Natural killer cell (primary cell): ENCODE measurements at regions of chr4 and their contacts with region 1.

Region 1: GRCh38 chr4:105471566-105472176 is 2.2 kb downstream of the PPA2 start:
- DNase-seq: peak; percentile 51 to 88
- ATAC-seq: peak; percentile 44 to 56 (median 45)
- H3K4me3 ChIP-seq: no peak overlapping the region
- H3K4me3 Mint-ChIP-seq: peak overlapping the region; percentile 54
- H3K27ac ChIP-seq: no peak overlapping the region
- H3K27ac Mint-ChIP-seq: peak overlapping the region; percentile 78 to 96
- H3K4me1 ChIP-seq: peaks cover 14% of the 10 kb centered on the region
- H3K4me1 Mint-ChIP-seq: peaks cover 43 to 53% of the 10 kb centered on the region in 2 donors
- H3K27me3 ChIP-seq: no peaks in the 10 kb centered on the region
- H3K27me3 Mint-ChIP-seq: no peaks in the 10 kb centered on the region
- CTCF ChIP-seq: peak; percentile 75

Region 2: DNA sequence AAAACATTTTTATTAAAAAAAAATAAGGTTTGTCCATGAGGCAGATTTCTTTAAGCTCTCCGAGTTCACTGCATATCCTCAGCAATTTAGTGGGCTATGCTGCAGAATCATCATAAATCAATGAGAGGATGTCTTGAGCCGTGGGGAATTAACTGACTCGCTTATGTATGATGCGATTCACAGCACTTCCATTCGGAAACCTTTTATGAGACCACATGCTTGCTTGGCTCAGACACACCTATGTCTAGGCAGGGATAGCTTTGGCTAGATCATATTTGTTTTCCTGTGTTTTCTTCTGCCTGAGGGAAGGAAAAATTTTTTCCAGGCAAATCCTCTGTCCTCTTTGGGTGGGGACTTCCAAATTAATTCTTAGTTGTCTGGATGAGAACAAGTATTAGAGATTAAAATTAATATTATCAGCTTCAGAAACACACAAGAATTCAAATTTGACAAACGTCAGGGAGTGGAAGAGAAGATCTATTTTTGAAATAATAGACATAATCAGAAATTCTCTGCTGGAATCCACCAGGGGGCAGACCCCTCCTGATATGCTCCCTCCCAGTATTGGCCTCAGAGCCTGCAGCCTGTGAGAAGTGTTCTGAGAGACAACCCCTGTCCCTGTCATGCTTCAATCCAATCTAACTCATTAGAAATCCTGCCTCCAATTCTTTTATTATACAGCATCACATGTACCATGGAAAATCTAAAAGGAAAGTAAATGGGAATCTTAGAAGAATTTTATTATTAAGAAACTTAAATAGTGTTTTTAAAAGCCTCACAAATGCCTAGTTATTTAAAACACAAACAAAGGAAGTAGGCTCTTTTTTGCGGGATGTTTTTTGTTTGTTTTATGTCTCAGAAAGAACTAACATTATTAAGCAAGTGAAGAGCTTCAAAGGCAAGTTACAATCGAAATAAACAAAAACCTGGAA is 1406.8 kb before region 1 on chr4:
- intact Hi-C with region 1: loop called (anchors 5 kb)
- DNase-seq: peak in 1 of 2 donors; percentile 5
- ATAC-seq: no peak
- H3K4me3 ChIP-seq: no peak overlapping the region
- H3K4me3 Mint-ChIP-seq: no peak overlapping the region
- H3K27ac ChIP-seq: no peak overlapping the region
- H3K27ac Mint-ChIP-seq: no peak overlapping the region
- H3K4me1 ChIP-seq: no peaks in the 10 kb centered on the region
- H3K4me1 Mint-ChIP-seq: no peaks in the 10 kb centered on the region
- H3K27me3 ChIP-seq: no peaks in the 10 kb centered on the region
- H3K27me3 Mint-ChIP-seq: no peaks in the 10 kb centered on the region
- CTCF ChIP-seq: no peak

Region 3: GRCh38 chr4:104896660-104897645 is 574.7 kb before region 1 on chr4:
- intact Hi-C with region 1: loop called (anchors 5 kb)
- DNase-seq: peak; percentile 9 to 33
- ATAC-seq: peak; percentile 85 to 95 (median 92)
- H3K4me3 ChIP-seq: no peak overlapping the region
- H3K4me3 Mint-ChIP-seq: peak overlapping the region; percentile 76
- H3K27ac ChIP-seq: peak overlapping the region; percentile 74
- H3K27ac Mint-ChIP-seq: peak overlapping the region; percentile 88 to 91
- H3K4me1 ChIP-seq: peaks cover 16% of the 10 kb centered on the region
- H3K4me1 Mint-ChIP-seq: peaks cover 65 to 73% of the 10 kb centered on the region in 2 donors
- H3K27me3 ChIP-seq: no peaks in the 10 kb centered on the region
- H3K27me3 Mint-ChIP-seq: no peaks in the 10 kb centered on the region
- CTCF ChIP-seq: no peak

Region 4: GRCh38 chr4:105140684-105141490 is 330.8 kb before region 1 on chr4:
- intact Hi-C with region 1: loop called (anchors 1 kb)
- DNase-seq: peak in 1 of 2 donors; percentile 80
- ATAC-seq: peak; percentile 48 to 75 (median 65)
- H3K4me3 ChIP-seq: no peak overlapping the region
- H3K4me3 Mint-ChIP-seq: no peak overlapping the region
- H3K27ac ChIP-seq: no peak overlapping the region
- H3K27ac Mint-ChIP-seq: no peak overlapping the region
- H3K4me1 ChIP-seq: peaks cover 4% of the 10 kb centered on the region
- H3K4me1 Mint-ChIP-seq: peaks cover 9 to 13% of the 10 kb centered on the region in 2 donors
- H3K27me3 ChIP-seq: no peaks in the 10 kb centered on the region
- H3K27me3 Mint-ChIP-seq: no peaks in the 10 kb centered on the region
- CTCF ChIP-seq: peak; percentile 64

Region 5: DNA sequence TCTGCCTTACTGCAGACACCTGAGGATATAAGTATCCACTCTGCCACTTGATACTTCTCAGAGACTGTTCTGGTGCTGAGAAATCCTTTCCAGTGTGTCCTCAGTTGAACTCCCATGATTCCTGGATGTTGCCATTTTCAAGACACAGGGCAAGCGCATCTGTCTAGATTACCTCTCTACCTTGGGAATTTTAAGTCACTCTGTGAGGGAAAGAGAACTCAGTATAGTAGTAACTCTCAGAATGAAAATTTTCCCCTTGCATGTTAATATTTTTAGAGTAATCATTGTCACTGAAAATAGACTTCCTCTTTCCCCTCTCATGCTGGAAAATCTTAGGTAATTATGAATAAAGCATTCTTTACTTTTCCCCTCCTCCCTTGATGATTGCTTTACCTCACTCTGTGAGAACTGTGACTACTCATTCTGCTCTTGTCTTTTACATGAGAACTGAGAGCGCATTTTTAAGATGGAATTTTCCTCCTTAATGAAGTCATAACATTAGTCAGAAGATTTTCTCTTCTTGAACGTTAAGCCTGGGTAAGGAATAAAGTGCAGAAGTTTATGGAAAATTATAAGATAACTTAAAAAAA is 280.0 kb before region 1 on chr4:
- intact Hi-C with region 1: loop called (anchors 5 kb)
- DNase-seq: no peak
- ATAC-seq: no peak
- H3K4me3 ChIP-seq: no peak overlapping the region
- H3K4me3 Mint-ChIP-seq: no peak overlapping the region
- H3K27ac ChIP-seq: peak overlapping the region; percentile 26
- H3K27ac Mint-ChIP-seq: peak overlapping the region; percentile 3 to 68
- H3K4me1 ChIP-seq: no peaks in the 10 kb centered on the region
- H3K4me1 Mint-ChIP-seq: peaks cover 60 to 65% of the 10 kb centered on the region in 2 donors
- H3K27me3 ChIP-seq: no peaks in the 10 kb centered on the region
- H3K27me3 Mint-ChIP-seq: no peaks in the 10 kb centered on the region
- CTCF ChIP-seq: no peak